HCT116 (cell line): ENCODE measurements at regions of chr9 and their contacts with region 1.

Region 1: DNA sequence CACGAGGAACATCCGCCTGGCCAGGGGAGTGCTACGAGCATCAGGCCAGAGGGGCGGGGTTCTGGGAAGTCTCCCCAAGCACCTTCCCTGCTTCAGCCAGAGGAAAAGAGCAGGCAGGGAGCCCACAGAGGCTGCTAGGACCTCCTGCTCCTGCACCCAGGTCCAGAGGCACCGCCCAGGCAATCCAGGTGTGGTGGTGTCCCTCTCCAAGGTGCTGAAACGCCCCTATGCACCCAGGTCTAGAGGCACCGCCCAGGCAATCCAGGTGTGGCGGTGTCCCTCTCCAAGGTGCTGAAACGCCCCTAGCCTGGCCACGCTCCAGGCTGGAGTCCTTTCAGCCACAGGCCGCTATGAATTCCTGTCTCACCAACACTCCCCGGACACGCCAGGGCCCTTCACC is 10.7 kb upstream of the UBAC1 start:
- DNase-seq: peak; percentile 67
- ATAC-seq: peak; percentile 87
- H3K4me3 ChIP-seq: no peak overlapping the region
- H3K27ac ChIP-seq: no peak overlapping the region
- H3K4me1 ChIP-seq: peaks cover 0 to 3% of the 10 kb centered on the region in 2 experiments; a peak in 1 of 4 replicates
- H3K27me3 ChIP-seq: peaks cover 4% of the 10 kb centered on the region; the same call in 1 of the 2 replicates
- CTCF ChIP-seq: no peak
- POLR2A ChIP-seq: no peak
- RAD21 ChIP-seq: no peak

Region 2: GRCh38 chr9:136138566-136138965 is 166.7 kb after region 1 on chr9:
- CTCF ChIA-PET with region 1: interaction called, 5 read pairs
- POLR2A ChIA-PET with region 1: no interaction called
- RAD21 ChIA-PET with region 1: interaction called in 1 of 2 experiments, 3 read pairs
- intact Hi-C with region 1: loop called (anchors 5 kb)
- DNase-seq: peak; percentile 63
- ATAC-seq: peak; percentile 68
- H3K4me3 ChIP-seq: no peak overlapping the region
- H3K27ac ChIP-seq: no peak overlapping the region
- H3K4me1 ChIP-seq: peaks cover 2 to 15% of the 10 kb centered on the region in 2 experiments; a peak in 3 of 4 replicates
- H3K27me3 ChIP-seq: no peaks in the 10 kb centered on the region
- CTCF ChIP-seq: peak; percentile 62 to 82 (median 79)
- POLR2A ChIP-seq: no peak
- RAD21 ChIP-seq: peak; percentile 68